Dendritic cell treated with granulocyte-macrophage colony-stimulating factor and Interleukin-4, amounts not matched to agents 40 ng/mL and 50 ng/mL, for 4 days (primary cell): ENCODE measurements at regions of chr2 and their contacts with region 1.

Region 1: GRCh38 chr2:152421521-152422370 is 86.8 kb downstream of the FMNL2 start:
- H3K4me3 Mint-ChIP-seq: peak overlapping the region; percentile 26
- H3K27ac Mint-ChIP-seq: peak overlapping the region; percentile 88
- H3K4me1 Mint-ChIP-seq: peaks cover 55% of the 10 kb centered on the region
- H3K27me3 Mint-ChIP-seq: no peaks in the 10 kb centered on the region

Region 2: DNA sequence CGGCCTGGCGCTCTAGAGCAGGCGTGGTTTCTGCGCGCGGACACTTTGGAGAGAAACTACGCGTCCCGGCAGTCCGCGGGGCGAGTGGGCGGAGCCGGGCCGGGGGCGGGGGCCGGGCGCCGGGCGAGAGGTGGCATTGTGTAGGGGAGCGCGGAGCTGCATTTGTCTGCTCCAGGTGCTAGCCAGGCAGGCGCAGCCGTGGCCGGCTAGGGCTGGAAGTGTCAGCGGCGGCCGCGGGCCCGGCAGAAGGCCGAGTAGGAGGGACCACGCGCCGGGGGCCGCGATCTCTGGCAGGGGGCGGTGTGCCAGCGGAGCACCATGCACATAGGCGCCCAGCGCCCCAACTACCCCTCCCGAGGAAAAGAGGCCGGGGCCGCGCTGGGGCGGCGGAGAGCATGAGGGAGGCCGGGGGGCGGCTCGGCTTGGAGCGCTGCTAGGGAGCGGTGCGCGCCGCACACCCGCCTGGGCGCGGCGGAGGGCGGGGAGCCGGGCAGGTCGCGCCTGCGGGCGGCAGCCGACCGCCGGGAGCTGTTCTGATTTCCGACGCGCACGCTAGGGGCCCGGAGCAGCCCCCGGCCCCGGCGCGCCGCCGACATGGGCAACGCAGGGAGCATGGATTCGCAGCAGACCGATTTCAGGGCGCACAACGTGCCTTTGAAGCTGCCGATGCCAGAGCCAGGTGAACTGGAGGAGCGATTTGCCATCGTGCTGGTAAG is 86.6 kb before region 1 on chr2 and contains the start of gene FMNL2:
- intact Hi-C with region 1: loop called (anchors 5 kb)
- H3K4me3 Mint-ChIP-seq: peak within 1 kb of the TSS; percentile 86
- H3K27ac Mint-ChIP-seq: peak within 1 kb of the TSS; percentile 82
- H3K4me1 Mint-ChIP-seq: peaks cover 29% of the 10 kb centered on the region
- H3K27me3 Mint-ChIP-seq: peaks cover 43% of the 10 kb centered on the region

Region 3: GRCh38 chr2:152407204-152407721 is 14.5 kb before region 1 on chr2:
- intact Hi-C with region 1: loop called (anchors 1 kb)
- H3K4me3 Mint-ChIP-seq: peak overlapping the region; percentile 40
- H3K27ac Mint-ChIP-seq: peak overlapping the region; percentile 88
- H3K4me1 Mint-ChIP-seq: peaks cover 83% of the 10 kb centered on the region
- H3K27me3 Mint-ChIP-seq: no peaks in the 10 kb centered on the region

Region 4: DNA sequence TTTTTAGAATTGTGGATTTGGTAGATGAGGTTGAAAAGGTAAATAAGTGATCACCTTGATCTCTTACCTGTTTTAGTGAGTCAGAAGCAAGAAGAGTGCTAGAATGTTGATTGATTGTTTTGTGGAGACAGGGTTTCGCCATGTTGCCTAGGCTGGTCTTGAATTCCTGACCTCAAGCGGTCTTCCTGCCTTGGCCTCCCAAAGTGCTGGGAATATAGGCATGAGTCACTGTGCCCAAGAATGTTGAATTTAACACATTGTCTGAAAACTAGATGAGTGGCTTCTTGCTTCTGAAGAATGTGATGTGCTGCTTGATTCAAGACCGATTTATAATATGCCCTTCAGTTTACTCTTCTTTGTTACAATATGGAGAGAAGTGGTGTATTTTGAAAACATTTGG is 34.5 kb after region 1 on chr2:
- intact Hi-C with region 1: no loop called
- H3K4me3 Mint-ChIP-seq: no peak overlapping the region
- H3K27ac Mint-ChIP-seq: no peak overlapping the region
- H3K4me1 Mint-ChIP-seq: peaks cover 7% of the 10 kb centered on the region
- H3K27me3 Mint-ChIP-seq: peaks cover 1% of the 10 kb centered on the region